ENCODE measurements at regions of chr22 and their contacts with region 1.

Region 1: GRCh38 chr22:29824677-29825076 is 13.4 kb downstream of the ASCC2 start:
- DNase-seq: peak; percentile 79 to 93
- H3K4me3 ChIP-seq: no peak overlapping the region
- CTCF ChIP-seq: no peak
- POLR2A ChIP-seq: no peak

Region 2: GRCh38 chr22:29117799-29118477 is 706.7 kb before region 1 on chr22:
- intact Hi-C with region 1: loop called (anchors 5 kb)
- DNase-seq: no peak
- H3K4me3 ChIP-seq: no peak overlapping the region
- CTCF ChIP-seq: no peak
- POLR2A ChIP-seq: no peak

Region 3: GRCh38 chr22:29883045-29883774 is 58.5 kb after region 1 on chr22 and contains the start of gene MTMR3:
- intact Hi-C with region 1: no loop called
- DNase-seq: peak; percentile 91 to 98
- H3K4me3 ChIP-seq: peak within 1 kb of the TSS; percentile 86
- CTCF ChIP-seq: peak in 1 of 3 donors; percentile 22
- POLR2A ChIP-seq: peak in 1 of 2 donors; percentile 78
- total RNA-seq, gene MTMR3: 51.4 to 70.5 (median 62.6) TPM

Measured in lower leg skin (tissue), 4 donors.